Ovary (tissue), 10 donors: ENCODE measurements at regions of chr14 and their contacts with region 1.

Region 1: GRCh38 chr14:65986041-65986440 is 500.1 kb upstream of the CCDC196 start:
- DNase-seq: no peak
- H3K4me3 ChIP-seq: no peak overlapping the region
- H3K27ac ChIP-seq: no peak overlapping the region
- H3K4me1 ChIP-seq: no peaks in the 10 kb centered on the region
- H3K27me3 ChIP-seq: no peaks in the 10 kb centered on the region
- CTCF ChIP-seq: no peak
- EP300 ChIP-seq: no peak
- POLR2A ChIP-seq: no peak

Region 2: GRCh38 chr14:66216763-66217162 is 230.7 kb after region 1 on chr14:
- intact Hi-C with region 1: loop called in 1 of 4 experiments (anchors 5 kb)
- DNase-seq: no peak
- H3K4me3 ChIP-seq: no peak overlapping the region
- H3K27ac ChIP-seq: no peak overlapping the region
- H3K4me1 ChIP-seq: no peaks in the 10 kb centered on the region
- H3K27me3 ChIP-seq: no peaks in the 10 kb centered on the region
- CTCF ChIP-seq: no peak
- EP300 ChIP-seq: no peak
- POLR2A ChIP-seq: no peak

Region 3: GRCh38 chr14:66254038-66254437 is 268.0 kb after region 1 on chr14:
- intact Hi-C with region 1: no loop called
- DNase-seq: no peak
- H3K4me3 ChIP-seq: no peak overlapping the region
- H3K27ac ChIP-seq: no peak overlapping the region
- H3K4me1 ChIP-seq: no peaks in the 10 kb centered on the region
- H3K27me3 ChIP-seq: no peaks in the 10 kb centered on the region
- CTCF ChIP-seq: no peak
- EP300 ChIP-seq: no peak
- POLR2A ChIP-seq: no peak